ENCODE measurements at regions of chr15 and their contacts with region 1.

Region 1: GRCh38 chr15:85831415-85832113 is 36.8 kb upstream of the KLHL25 start:
- DNase-seq: peak; percentile 39
- H3K4me3 ChIP-seq: no peak overlapping the region
- H3K27ac ChIP-seq: no peak overlapping the region
- H3K4me1 ChIP-seq: no peaks in the 10 kb centered on the region
- H3K27me3 ChIP-seq: no peaks in the 10 kb centered on the region
- CTCF ChIP-seq: peak; percentile 28 to 69 (median 60)
- POLR2A ChIP-seq: no peak

Region 2: DNA sequence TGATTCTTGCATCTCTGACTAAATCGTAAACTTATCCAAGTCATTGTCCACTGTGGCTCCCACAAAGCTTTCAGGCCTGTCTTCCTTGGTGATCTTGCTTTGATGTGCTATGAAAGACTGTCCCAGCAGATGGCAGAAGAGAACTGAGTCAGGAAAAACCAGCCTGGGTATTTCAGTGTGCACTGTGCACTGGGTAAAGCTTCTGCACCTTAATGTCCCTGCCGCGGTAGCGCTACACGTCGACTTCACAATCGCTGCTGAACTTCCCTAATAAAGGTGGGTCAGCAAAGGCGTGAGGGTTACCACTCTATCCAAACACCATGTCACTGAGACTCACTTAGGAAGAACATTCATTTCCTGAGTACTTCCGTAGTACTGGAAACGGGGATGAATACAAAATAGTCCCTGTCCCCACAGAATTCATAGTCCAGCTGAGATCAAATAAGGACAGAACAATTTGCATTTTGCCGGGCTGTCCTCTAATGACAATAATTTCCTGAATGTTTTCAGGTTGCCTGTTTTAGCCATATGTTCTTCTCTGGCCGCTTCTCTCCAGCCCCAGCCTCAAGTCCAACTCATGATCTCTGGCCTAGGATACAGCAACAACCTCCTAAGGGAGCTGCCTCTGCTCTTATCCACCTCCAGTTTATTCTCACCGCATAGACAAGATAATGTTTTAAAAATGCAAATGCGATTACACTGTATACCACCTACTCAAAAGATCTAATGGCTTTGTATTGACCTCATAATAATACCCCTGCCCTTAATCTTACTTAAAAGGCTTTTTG is 534.8 kb before region 1 on chr15:
- intact Hi-C with region 1: loop called (anchors 10 kb)
- DNase-seq: peak; percentile 76
- H3K4me3 ChIP-seq: no peak overlapping the region
- H3K27ac ChIP-seq: no peak overlapping the region
- H3K4me1 ChIP-seq: no peaks in the 10 kb centered on the region
- H3K27me3 ChIP-seq: no peaks in the 10 kb centered on the region
- CTCF ChIP-seq: peak; percentile 26 to 86 (median 75)
- POLR2A ChIP-seq: no peak

Region 3: DNA sequence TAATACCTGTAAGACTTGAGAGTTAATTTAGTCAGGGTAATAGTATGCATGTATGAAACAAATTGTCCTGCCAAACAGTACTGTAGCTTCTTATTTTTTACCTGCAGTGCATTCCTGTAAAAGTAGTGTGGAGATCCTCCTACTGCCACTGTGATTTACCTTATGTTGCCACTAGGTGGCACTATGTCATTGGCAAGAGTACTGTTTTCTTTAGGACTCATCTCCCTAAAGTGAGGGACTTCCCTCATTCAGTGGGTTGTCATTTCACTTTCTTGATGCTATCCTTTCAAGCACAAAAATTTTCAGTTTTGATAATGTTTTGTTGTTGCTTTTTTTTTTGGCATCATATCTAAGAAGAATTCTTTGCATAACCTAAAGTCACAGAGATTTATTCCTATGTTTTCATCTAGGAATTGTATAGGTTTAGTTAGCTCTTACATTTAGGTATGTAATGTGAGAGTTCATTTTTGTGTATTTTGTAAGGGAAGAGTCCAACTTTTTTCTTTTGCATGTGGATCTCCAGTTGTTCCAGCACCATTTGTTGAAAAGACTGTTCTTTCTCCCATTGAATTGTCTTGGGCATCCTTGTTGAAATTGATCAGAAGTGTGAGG is 345.5 kb before region 1 on chr15:
- intact Hi-C with region 1: loop called (anchors 10 kb)
- DNase-seq: peak; percentile 82
- H3K4me3 ChIP-seq: no peak overlapping the region
- H3K27ac ChIP-seq: no peak overlapping the region
- H3K4me1 ChIP-seq: peaks cover 2% of the 10 kb centered on the region
- H3K27me3 ChIP-seq: no peaks in the 10 kb centered on the region
- CTCF ChIP-seq: peak; percentile 54 to 79 (median 71)
- POLR2A ChIP-seq: no peak

Region 4: DNA sequence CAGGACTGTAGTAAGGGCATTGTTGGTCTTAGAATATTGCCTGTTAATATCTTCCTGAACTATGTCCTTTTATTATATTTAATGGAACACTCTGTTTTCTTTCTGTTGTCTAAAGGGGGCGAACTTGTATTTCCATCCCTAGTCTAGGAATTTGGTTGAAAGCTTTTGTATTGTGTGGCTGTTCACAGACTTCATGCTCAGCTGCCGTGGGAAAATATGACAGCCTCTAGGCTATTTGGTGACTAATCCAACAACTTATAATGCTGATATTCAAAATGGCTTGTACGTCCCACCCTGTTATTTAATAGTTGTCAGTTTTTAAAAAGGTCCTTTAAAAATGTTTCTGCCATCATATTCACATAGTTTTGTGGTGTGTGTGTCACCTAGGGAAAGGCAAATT is 239.4 kb before region 1 on chr15:
- intact Hi-C with region 1: loop called (anchors 10 kb)
- DNase-seq: no peak
- H3K4me3 ChIP-seq: no peak overlapping the region
- H3K27ac ChIP-seq: no peak overlapping the region
- H3K4me1 ChIP-seq: no peaks in the 10 kb centered on the region
- H3K27me3 ChIP-seq: no peaks in the 10 kb centered on the region
- CTCF ChIP-seq: peak in 1 of 4 experiments; percentile 5
- POLR2A ChIP-seq: no peak

Region 5: GRCh38 chr15:85730001-85730820 is 101.4 kb before region 1 on chr15:
- intact Hi-C with region 1: loop called (anchors 2 kb)
- DNase-seq: peak; percentile 66
- H3K4me3 ChIP-seq: no peak overlapping the region
- H3K27ac ChIP-seq: peak overlapping the region in 1 of 2 donors; percentile 10
- H3K4me1 ChIP-seq: no peaks in the 10 kb centered on the region
- H3K27me3 ChIP-seq: no peaks in the 10 kb centered on the region
- CTCF ChIP-seq: peak; percentile 50 to 83 (median 81)
- POLR2A ChIP-seq: no peak

Region 6: DNA sequence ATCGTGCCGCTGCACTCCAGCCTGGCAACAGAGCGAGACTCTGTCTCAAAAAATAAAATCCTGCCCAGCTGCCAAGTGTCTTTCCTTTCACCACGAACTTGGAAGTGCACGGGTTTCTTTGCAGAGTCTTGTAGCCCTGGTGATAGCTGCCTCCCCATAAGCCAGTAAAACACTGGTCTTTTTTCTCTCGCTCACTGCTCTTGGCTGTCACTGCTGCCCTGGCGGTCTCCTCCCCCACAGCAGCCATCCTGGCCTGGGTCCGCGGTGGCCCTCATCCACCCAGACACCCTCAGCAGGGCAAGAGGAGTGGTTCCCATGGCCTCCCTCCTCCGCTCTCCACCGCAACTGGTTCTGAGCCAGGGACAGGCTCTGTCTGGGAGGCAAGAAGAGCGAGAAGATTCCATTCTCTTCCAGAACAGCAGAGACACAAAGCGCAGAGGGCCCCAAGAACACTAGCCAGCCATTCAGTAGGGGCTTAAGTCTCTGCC is 81.2 kb before region 1 on chr15:
- intact Hi-C with region 1: loop called (anchors 5 kb)
- DNase-seq: peak; percentile 48
- H3K4me3 ChIP-seq: peak overlapping the region in 1 of 2 donors; percentile 1
- H3K27ac ChIP-seq: peak overlapping the region; percentile 65 to 70
- H3K4me1 ChIP-seq: peaks cover 7% of the 10 kb centered on the region
- H3K27me3 ChIP-seq: no peaks in the 10 kb centered on the region
- CTCF ChIP-seq: peak in 1 of 4 experiments; percentile 8
- POLR2A ChIP-seq: no peak